ENCODE measurements at regions of chr13 and their contacts with region 1.

Region 1: GRCh38 chr13:33723772-33724435 is 94.0 kb upstream of the RFC3 start:
- DNase-seq: peak; percentile 56
- H3K4me3 Mint-ChIP-seq: no peak overlapping the region
- H3K27ac Mint-ChIP-seq: peak overlapping the region; percentile 80
- H3K4me1 Mint-ChIP-seq: peaks cover 34% of the 10 kb centered on the region
- H3K27me3 Mint-ChIP-seq: no peaks in the 10 kb centered on the region

Region 2: GRCh38 chr13:32911506-32911905 is 812.4 kb before region 1 on chr13:
- intact Hi-C with region 1: loop called (anchors 10 kb)
- DNase-seq: peak; percentile 16
- H3K4me3 Mint-ChIP-seq: no peak overlapping the region
- H3K27ac Mint-ChIP-seq: no peak overlapping the region
- H3K4me1 Mint-ChIP-seq: peaks cover 23% of the 10 kb centered on the region
- H3K27me3 Mint-ChIP-seq: no peaks in the 10 kb centered on the region

Region 3: GRCh38 chr13:33228648-33229445 is 495.1 kb before region 1 on chr13:
- intact Hi-C with region 1: loop called (anchors 1 kb)
- DNase-seq: no peak
- H3K4me3 Mint-ChIP-seq: no peak overlapping the region
- H3K27ac Mint-ChIP-seq: no peak overlapping the region
- H3K4me1 Mint-ChIP-seq: peaks cover 6% of the 10 kb centered on the region
- H3K27me3 Mint-ChIP-seq: no peaks in the 10 kb centered on the region

Region 4: DNA sequence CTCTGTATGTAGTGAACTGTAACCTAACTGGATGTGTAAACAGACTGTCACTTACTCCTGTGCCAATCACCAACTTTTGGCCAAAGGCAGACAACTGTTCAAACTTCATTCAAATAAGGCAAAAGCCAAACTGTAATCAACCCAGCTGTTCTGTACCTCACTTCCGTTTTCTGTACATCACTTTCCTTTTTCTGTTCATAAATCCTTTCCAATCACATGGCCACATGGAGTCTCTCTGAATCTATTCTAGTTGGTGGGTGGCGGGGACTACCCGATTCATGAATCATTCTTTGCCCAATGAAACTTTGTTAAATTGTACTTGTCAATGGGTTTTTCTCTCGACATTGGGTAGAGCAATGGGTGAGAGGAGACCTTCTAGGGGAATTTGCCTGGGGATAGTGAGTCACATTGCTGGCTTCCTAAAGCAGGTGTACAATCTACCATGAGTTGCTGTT is 84.3 kb before region 1 on chr13:
- intact Hi-C with region 1: loop called (anchors 2 kb)
- DNase-seq: no peak
- H3K4me3 Mint-ChIP-seq: no peak overlapping the region
- H3K27ac Mint-ChIP-seq: peak overlapping the region; percentile 80
- H3K4me1 Mint-ChIP-seq: peaks cover 48% of the 10 kb centered on the region
- H3K27me3 Mint-ChIP-seq: no peaks in the 10 kb centered on the region

Region 5: DNA sequence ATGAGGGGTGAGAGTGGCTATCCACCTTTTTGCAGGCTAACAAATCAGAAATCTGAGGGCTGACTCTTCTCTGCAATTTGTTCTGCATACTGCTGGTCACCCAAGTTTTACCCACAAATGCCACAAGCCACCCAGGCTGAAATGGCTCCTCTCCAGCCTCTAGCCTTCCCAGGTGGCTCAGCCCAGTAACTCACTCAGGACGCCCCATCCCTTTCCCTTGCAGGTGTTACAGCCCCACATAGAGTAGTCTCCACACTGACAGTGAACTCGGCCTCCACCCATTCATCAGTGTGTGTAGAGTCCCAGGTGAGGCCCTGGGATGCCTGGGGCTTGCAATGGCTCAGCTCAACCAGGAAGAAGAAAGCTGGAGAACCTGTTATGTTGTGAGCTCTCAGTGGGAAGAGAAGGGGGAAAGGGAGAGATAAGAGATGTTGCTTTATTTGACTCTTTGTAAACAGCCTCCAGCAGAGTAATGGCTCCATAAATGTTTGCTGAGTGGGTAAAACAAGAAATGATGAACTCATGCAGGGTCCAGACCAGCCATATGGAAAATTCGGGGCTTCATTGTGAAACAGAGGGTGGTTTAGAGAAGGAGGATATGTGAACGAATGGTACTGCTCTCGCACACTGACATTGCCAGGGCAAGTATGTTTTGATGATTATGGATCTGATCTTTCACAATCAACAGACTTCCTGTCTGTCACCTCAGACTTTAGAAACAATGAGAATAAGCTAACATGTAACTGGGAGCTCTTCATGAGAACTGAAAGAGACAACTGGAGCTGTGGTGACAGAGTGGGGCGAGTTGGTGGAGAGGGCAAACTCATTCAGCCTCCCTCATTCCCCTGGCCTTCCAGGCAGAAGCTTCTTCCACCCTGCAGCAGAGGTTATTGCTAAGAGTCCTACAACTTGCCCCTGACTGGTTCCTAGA is 19.8 kb after region 1 on chr13:
- intact Hi-C with region 1: loop called (anchors 2 kb)
- DNase-seq: peak; percentile 13
- H3K4me3 Mint-ChIP-seq: peak overlapping the region; percentile 48
- H3K27ac Mint-ChIP-seq: peak overlapping the region; percentile 80
- H3K4me1 Mint-ChIP-seq: peaks cover 26% of the 10 kb centered on the region
- H3K27me3 Mint-ChIP-seq: no peaks in the 10 kb centered on the region